Uterus (tissue), 4 donors: ENCODE measurements at regions of chr10 and their contacts with region 1.

Region 1: GRCh38 chr10:122298598-122299301 is 27.7 kb downstream of the BTBD16 start:
- DNase-seq: peak; percentile 79 to 81
- H3K4me3 ChIP-seq: no peak overlapping the region
- H3K27ac ChIP-seq: peak overlapping the region in 1 of 2 donors; percentile 49
- H3K4me1 ChIP-seq: no peaks in the 10 kb centered on the region
- H3K27me3 ChIP-seq: no peaks in the 10 kb centered on the region
- CTCF ChIP-seq: peak; percentile 90 to 96 (median 92)
- POLR2A ChIP-seq: peak in 1 of 2 donors; percentile 14

Region 2: GRCh38 chr10:122435212-122435827 is 136.6 kb after region 1 on chr10:
- intact Hi-C with region 1: loop called (anchors 2 kb)
- DNase-seq: no peak
- H3K4me3 ChIP-seq: no peak overlapping the region
- H3K27ac ChIP-seq: no peak overlapping the region
- H3K4me1 ChIP-seq: no peaks in the 10 kb centered on the region
- H3K27me3 ChIP-seq: no peaks in the 10 kb centered on the region
- CTCF ChIP-seq: peak; percentile 64 to 76 (median 68)
- POLR2A ChIP-seq: no peak

Region 3: GRCh38 chr10:122565728-122566206 is 267.0 kb after region 1 on chr10:
- intact Hi-C with region 1: loop called (anchors 5 kb)
- DNase-seq: peak; percentile 85 to 86
- H3K4me3 ChIP-seq: no peak overlapping the region
- H3K27ac ChIP-seq: no peak overlapping the region
- H3K4me1 ChIP-seq: no peaks in the 10 kb centered on the region
- H3K27me3 ChIP-seq: no peaks in the 10 kb centered on the region
- CTCF ChIP-seq: peak; percentile 82 to 92 (median 86)
- POLR2A ChIP-seq: peak in 1 of 2 donors; percentile 17